Activated CD8-positive, alpha-beta T cell treated with anti-CD3 and anti-CD28 coated beads for 36 hours (primary cell): ENCODE measurements at regions of chr3 and their contacts with region 1.

Region 1: GRCh38 chr3:28334552-28334951 is 14.0 kb upstream of the ZCWPW2 start:
- DNase-seq: no peak
- ATAC-seq: no peak
- H3K4me3 Mint-ChIP-seq: no peak overlapping the region
- H3K27ac Mint-ChIP-seq: no peak overlapping the region
- H3K4me1 Mint-ChIP-seq: peaks cover 10% of the 10 kb centered on the region
- H3K27me3 Mint-ChIP-seq: no peaks in the 10 kb centered on the region
- CTCF ChIP-seq: peak; percentile 13

Region 2: DNA sequence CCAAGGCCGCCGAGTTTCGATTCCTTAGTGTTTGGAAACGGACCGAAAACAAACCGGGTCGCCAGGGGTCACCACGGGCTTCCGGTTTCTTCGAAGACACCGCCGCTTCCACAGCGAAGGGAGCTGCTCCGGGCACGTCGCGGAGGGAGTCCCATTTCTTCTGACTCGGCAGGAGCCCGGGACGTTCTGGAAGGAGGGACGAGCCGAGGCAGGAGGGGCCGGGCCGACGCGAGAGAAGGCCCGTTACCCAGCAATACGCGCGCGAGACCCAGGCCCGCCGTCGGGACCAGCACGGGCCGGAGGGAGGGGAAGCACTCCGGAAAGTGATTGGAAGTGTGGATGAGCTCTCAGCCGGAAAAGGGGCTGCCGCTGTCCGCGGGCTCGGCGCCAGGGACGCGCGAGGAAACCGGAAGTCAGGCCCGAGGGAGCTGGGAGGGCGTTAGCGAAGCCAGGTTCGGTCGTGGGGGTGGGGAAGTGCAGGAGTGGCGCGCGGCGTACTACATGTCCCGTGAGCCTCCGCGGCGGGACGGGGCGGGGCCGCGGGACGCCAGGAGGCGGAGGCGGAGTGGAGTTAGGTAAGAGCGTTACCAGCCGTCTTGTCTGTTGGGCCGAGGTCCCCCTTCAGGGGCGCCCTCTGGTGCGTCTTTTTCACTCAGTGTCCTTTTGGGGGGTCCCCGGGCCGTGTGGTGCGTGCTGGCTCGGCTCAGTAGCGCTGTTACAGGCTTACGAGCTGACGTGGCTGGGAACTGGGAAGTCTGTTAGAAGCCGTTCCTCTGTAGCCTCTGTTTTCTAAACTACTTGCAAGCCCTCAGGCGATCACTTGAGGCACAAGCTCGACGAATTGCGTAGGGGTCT is 14.3 kb after region 1 on chr3 and contains the starts of genes AZI2 and ZCWPW2:
- CTCF ChIA-PET with region 1: interaction called, 12 read pairs
- POLR2A ChIA-PET with region 1: no interaction called
- intact Hi-C with region 1: no loop called
- DNase-seq: peak; percentile 95
- ATAC-seq: peak; percentile 87
- H3K4me3 Mint-ChIP-seq: peak within 1 kb of the TSS; percentile 96
- H3K27ac Mint-ChIP-seq: peak within 1 kb of the TSS; percentile 93
- H3K4me1 Mint-ChIP-seq: peaks cover 41% of the 10 kb centered on the region
- H3K27me3 Mint-ChIP-seq: no peaks in the 10 kb centered on the region
- CTCF ChIP-seq: no peak
- total RNA-seq, gene AZI2: 35.1 to 39.1 TPM
- total RNA-seq, gene ZCWPW2: 0.68 TPM in 1 of 2 experiments, not detected in the other

Region 3: DNA sequence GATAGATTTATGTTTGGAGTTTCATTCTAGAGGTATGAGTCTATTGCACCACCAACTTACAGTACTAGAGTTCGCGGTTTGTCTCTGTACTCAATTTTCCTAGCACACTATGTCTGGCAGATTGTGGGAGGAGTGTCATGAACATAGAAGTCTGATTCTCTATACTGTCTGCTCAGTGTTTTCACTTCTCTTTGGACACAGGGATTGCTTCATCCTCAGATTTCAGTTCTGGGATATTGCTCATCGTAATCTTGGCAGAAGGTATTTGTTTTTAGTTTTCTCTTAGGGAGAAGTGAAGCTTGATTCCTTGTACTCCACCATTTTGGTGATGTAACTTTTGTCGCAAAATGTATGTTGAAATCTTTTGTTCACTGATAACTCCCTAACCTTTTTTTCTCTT is 41.9 kb after region 1 on chr3:
- CTCF ChIA-PET with region 1: no interaction called
- POLR2A ChIA-PET with region 1: no interaction called
- intact Hi-C with region 1: no loop called
- DNase-seq: no peak
- ATAC-seq: no peak
- H3K4me3 Mint-ChIP-seq: no peak overlapping the region
- H3K27ac Mint-ChIP-seq: no peak overlapping the region
- H3K4me1 Mint-ChIP-seq: no peaks in the 10 kb centered on the region
- H3K27me3 Mint-ChIP-seq: peaks cover 2% of the 10 kb centered on the region
- CTCF ChIP-seq: no peak